ENCODE measurements at regions of chr1 and their contacts with region 1.

Region 1: DNA sequence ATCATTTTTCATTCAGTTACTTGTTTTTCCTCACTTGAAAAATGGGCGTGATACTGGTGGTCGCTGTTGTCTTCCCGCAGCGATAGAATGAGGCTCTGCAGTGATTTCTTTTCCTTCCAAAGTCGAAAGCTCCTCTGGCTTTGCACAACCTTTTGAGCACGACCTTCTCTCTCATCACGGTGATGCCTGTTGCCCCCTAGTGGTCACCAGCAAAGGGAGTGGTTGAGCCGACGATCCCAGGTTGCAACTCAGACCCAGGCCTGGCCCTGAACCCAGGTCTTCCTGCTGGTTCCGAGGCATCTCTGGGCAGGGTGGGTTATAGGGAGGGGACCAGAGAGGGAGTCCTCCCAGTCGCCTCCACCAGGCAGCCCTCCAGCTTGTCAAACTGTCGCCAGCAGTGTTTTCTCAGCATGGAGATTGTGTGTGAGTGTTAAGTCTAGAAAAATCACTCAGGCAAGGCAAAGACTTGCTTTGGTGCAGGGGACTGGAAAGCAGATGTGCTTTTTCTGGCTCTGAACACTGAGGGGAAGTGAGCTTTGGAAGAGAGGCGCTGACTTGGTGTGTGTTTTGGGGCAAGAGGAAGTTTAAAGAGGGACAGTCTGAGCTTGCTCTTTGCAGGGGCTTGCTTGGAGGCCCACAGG is 285.3 kb downstream of the CAMTA1 start:
- DNase-seq: peak; percentile 72
- ATAC-seq: peak; percentile 94
- H3K4me3 ChIP-seq: peak overlapping the region; percentile 19
- H3K27ac ChIP-seq: no peak overlapping the region
- H3K4me1 ChIP-seq: no peaks in the 10 kb centered on the region
- H3K27me3 ChIP-seq: peaks cover 11% of the 10 kb centered on the region
- CTCF ChIP-seq: peak; percentile 81
- POLR2A ChIP-seq: no peak
- RAD21 ChIP-seq: peak; percentile 76

Region 2: DNA sequence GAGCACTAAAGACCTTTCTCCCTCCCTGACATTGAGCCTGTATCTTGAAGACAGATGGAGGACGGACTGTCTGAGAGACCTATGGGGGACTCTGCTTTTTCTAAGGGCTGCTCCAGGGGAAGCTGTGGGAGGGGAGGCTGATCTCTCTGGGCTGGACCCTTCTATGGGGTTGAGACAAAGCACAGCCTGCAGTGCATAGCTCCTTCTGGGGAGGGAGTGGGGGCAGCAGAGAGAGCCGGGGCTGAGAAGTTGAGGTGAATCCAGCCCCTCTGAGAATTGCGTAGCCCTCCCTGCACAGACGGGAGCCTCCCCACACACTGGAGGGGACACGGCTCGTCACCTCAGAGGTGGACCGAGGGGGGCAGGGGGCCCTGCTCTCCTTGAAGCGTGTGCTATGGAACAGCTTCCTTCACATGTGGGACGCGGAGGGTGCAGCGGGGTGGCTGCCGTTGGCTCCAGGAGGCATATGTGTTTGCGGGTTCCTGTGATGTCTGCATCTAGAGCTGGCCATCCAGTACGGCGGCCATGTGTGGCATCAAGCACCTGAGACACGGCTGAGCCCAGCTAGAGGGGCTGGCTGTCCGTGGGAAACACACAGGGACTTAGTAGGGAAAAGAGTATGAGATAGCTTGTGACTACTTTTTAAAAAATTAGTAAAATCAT is 13.9 kb after region 1 on chr1:
- CTCF ChIA-PET with region 1: interaction called, 13 read pairs
- POLR2A ChIA-PET with region 1: no interaction called
- dilution Hi-C with region 1: no loop called
- in situ Hi-C with region 1: no loop called
- intact Hi-C with region 1: no loop called
- DNase-seq: no peak
- ATAC-seq: no peak
- H3K4me3 ChIP-seq: no peak overlapping the region
- H3K27ac ChIP-seq: no peak overlapping the region
- H3K4me1 ChIP-seq: no peaks in the 10 kb centered on the region
- H3K27me3 ChIP-seq: peaks cover 22% of the 10 kb centered on the region
- CTCF ChIP-seq: no peak
- POLR2A ChIP-seq: no peak
- RAD21 ChIP-seq: no peak